Panc1 (cell line): ENCODE measurements at regions of chr3 and their contacts with region 1.

Region 1: DNA sequence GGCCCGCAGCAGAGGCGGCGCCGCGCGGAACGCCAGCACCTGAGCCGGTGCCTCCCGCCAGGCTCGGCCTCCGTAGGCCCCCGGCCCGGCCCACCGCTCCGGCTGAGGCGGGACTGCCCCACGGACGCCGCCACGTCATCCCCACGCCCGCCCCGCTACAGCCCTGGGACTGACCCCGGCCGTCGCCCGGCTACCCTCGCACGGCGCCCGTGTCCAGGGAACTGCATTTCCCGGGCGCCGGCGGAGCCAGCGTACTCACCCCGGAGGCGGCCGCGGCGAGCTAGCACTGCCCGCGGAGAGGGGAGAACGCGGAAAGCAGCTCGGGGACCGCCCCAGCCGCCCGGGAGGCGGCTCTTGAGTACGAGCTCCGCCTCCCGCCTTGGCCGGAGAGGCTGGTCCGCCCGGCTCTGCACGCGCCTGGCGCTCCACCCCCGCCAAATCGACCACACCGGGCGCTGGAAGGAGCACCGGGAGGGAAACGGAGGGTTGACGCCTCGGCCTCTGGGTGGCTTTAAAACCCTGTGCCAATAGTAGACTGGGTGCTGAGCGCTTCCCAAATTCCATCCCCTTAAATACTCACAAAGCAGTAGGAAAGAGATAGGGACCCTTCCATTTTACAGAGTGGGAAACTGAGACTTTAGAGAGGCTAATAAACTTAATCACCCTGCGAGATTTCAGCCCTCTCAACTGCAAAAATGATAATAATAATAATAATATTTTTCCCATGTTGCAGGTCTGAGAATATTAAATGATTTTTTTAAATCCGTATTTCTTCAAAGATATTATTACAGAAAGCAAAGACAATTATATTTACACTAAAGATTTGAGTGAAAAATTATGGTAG is at the start of gene B4GALT4:
- DNase-seq: peak; percentile 25
- ATAC-seq: peak; percentile 96
- H3K4me3 ChIP-seq: peak within 1 kb of the TSS; percentile 85 to 86
- H3K27ac ChIP-seq: peak within 1 kb of the TSS; percentile 93
- H3K4me1 ChIP-seq: peaks cover 21% of the 10 kb centered on the region
- H3K27me3 ChIP-seq: no peaks in the 10 kb centered on the region
- CTCF ChIP-seq: no peak
- total RNA-seq, gene B4GALT4: 27.4 TPM

Region 2: DNA sequence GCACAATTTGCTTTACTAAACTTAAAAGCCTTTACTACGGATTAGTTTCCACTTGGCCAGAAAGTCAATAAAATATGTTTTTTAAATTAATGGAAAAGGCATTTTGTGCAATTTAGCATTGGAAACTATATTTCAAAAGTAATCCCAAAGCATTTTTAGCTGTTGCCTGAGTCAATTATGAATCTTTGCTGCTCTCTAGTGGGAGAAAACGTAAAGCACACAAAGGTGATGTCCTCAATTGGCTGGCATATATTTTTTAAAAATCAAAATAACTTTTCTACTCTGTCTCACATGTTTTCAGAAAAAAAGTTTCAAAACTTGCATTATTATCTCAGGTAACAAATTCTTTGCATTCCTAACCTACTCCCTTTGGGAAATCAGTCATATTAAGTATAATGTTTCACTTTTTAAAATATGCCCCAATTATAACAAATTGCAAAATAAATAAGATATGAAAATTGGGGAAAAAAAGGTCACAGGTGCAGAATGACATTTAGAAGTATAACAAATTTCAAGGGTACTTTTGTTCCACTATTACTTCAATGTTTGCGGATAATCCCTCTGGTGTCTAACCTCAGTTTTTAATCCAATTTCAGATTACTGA is 142.1 kb before region 1 on chr3:
- CTCF ChIA-PET with region 1: no interaction called
- POLR2A ChIA-PET with region 1: no interaction called
- in situ Hi-C with region 1: no loop called
- intact Hi-C with region 1: loop called (anchors 5 kb)
- DNase-seq: peak; percentile 20
- ATAC-seq: no peak; the same call in 1 of the 2 replicates
- H3K4me3 ChIP-seq: no peak overlapping the region
- H3K27ac ChIP-seq: no peak overlapping the region
- H3K4me1 ChIP-seq: no peaks in the 10 kb centered on the region
- H3K27me3 ChIP-seq: no peaks in the 10 kb centered on the region
- CTCF ChIP-seq: peak; percentile 78; the same call in 1 of the 2 replicates

Region 3: DNA sequence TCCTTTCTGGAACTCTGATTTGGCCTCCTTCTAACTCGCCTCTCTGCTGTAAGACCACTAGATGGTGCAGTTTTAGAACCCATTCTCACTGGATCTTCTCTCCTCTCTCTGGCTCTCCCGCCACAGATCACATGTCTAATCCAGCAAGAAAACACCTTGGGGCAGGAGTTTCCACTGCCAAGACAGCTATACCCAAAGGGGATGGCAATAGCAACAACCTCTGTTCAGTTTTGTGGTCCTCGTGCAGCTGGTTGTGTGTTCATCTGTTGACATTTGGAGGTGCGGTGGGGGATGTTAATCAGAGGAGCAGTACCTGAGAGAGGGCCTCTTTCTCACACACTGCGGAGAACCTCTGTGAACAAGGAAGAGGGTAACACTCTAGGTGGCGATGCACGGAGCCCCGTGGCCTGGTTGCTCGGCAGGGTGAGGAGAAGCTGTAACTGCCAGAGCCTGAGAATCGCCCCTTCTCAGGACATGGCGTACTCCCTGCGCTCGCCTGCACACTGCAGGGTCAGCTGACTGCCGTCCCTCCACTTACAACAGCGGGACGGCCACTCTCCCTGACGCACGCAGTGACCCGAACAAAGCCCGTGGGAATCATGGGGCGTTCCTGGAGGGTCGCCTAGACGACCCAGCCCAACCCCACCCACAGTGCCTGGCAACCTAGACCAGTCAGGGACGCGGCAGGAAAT is 95.2 kb before region 1 on chr3 and contains the start of gene TEX55:
- CTCF ChIA-PET with region 1: interaction called, 9 read pairs
- POLR2A ChIA-PET with region 1: no interaction called
- in situ Hi-C with region 1: no loop called
- intact Hi-C with region 1: loop called (anchors 1 kb)
- DNase-seq: no peak
- ATAC-seq: peak; percentile 82
- H3K4me3 ChIP-seq: no peak within 1 kb of the TSS
- H3K27ac ChIP-seq: no peak within 1 kb of the TSS
- H3K4me1 ChIP-seq: no peaks in the 10 kb centered on the region
- H3K27me3 ChIP-seq: no peaks in the 10 kb centered on the region
- CTCF ChIP-seq: peak; percentile 70
- total RNA-seq, gene TEX55: not detected

Region 4: DNA sequence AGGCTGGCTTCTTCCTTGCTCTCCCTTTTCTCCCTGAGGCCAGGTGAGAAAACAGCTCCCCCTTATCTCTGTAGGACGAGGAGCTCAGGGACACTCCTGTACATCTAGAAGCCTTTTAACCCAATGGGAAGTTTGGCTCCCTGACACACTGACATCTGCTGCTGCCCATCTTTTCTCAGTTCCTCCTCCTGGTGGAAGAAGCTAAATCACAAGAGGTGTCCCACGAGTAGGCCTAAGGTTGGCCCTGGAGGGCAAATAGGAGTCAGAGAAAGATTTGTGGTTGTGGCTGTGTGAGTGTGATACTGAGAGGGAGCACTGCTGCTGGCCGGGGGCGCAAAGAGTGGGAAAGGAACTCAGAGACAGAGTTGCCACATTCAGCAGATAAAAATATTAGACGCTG is 102.9 kb after region 1 on chr3:
- CTCF ChIA-PET with region 1: no interaction called
- POLR2A ChIA-PET with region 1: no interaction called
- in situ Hi-C with region 1: no loop called
- intact Hi-C with region 1: no loop called
- DNase-seq: no peak
- ATAC-seq: no peak
- H3K4me3 ChIP-seq: no peak overlapping the region
- H3K27ac ChIP-seq: no peak overlapping the region
- H3K4me1 ChIP-seq: no peaks in the 10 kb centered on the region
- H3K27me3 ChIP-seq: no peaks in the 10 kb centered on the region
- CTCF ChIP-seq: no peak

Region 5: GRCh38 chr3:120348981-120349818 is 1108.4 kb after region 1 on chr3 and contains the start of gene LRRC58:
- CTCF ChIA-PET with region 1: interaction called, 11 read pairs
- POLR2A ChIA-PET with region 1: no interaction called
- in situ Hi-C with region 1: no loop called
- intact Hi-C with region 1: no loop called
- DNase-seq: peak; percentile 58
- ATAC-seq: peak; percentile 97
- H3K4me3 ChIP-seq: peak within 1 kb of the TSS; percentile 82 to 95
- H3K27ac ChIP-seq: peak within 1 kb of the TSS; percentile 94
- H3K4me1 ChIP-seq: peaks cover 30% of the 10 kb centered on the region
- H3K27me3 ChIP-seq: no peaks in the 10 kb centered on the region; the same call in 1 of the 2 replicates
- CTCF ChIP-seq: peak; percentile 68
- total RNA-seq, gene LRRC58: 29.5 TPM